ENCODE measurements at regions of chr6 and their contacts with region 1.

Region 1: GRCh38 chr6:157954150-157955117 is 27.2 kb upstream of the SYNJ2 start:
- DNase-seq: peak; percentile 92 to 95
- H3K4me3 ChIP-seq: peak overlapping the region; percentile 31
- H3K4me3 Mint-ChIP-seq: peak overlapping the region; percentile 73
- H3K27ac Mint-ChIP-seq: peak overlapping the region; percentile 99
- H3K4me1 ChIP-seq: peaks cover 33% of the 10 kb centered on the region
- H3K4me1 Mint-ChIP-seq: peaks cover 26% of the 10 kb centered on the region
- H3K27me3 ChIP-seq: no peaks in the 10 kb centered on the region
- H3K27me3 Mint-ChIP-seq: no peaks in the 10 kb centered on the region
- CTCF ChIP-seq: peak; percentile 30 to 48

Region 2: GRCh38 chr6:157323255-157323965 is 631.0 kb before region 1 on chr6 and contains the start of gene TMEM242:
- CTCF ChIA-PET with region 1: no interaction called
- POLR2A ChIA-PET with region 1: no interaction called
- intact Hi-C with region 1: loop called (anchors 10 kb)
- DNase-seq: peak; percentile 92 to 94
- H3K4me3 ChIP-seq: peak within 1 kb of the TSS; percentile 72
- H3K4me3 Mint-ChIP-seq: peak within 1 kb of the TSS; percentile 87
- H3K27ac Mint-ChIP-seq: peak within 1 kb of the TSS; percentile 93
- H3K4me1 ChIP-seq: peaks cover 14% of the 10 kb centered on the region; the same call in 1 of the 2 replicates
- H3K4me1 Mint-ChIP-seq: peaks cover 9% of the 10 kb centered on the region
- H3K27me3 ChIP-seq: no peaks in the 10 kb centered on the region
- H3K27me3 Mint-ChIP-seq: no peaks in the 10 kb centered on the region
- CTCF ChIP-seq: peak; percentile 13 to 43
- total RNA-seq, gene TMEM242: 12.1 and 12.6 TPM in 2 replicates

Region 3: GRCh38 chr6:157514659-157515496 is 439.6 kb before region 1 on chr6:
- CTCF ChIA-PET with region 1: no interaction called
- POLR2A ChIA-PET with region 1: no interaction called
- intact Hi-C with region 1: no loop called
- DNase-seq: no peak
- H3K4me3 ChIP-seq: no peak overlapping the region
- H3K4me3 Mint-ChIP-seq: no peak overlapping the region
- H3K27ac Mint-ChIP-seq: no peak overlapping the region
- H3K4me1 ChIP-seq: peaks cover 29% of the 10 kb centered on the region
- H3K4me1 Mint-ChIP-seq: peaks cover 26% of the 10 kb centered on the region
- H3K27me3 ChIP-seq: no peaks in the 10 kb centered on the region
- H3K27me3 Mint-ChIP-seq: no peaks in the 10 kb centered on the region
- CTCF ChIP-seq: no peak

Region 4: DNA sequence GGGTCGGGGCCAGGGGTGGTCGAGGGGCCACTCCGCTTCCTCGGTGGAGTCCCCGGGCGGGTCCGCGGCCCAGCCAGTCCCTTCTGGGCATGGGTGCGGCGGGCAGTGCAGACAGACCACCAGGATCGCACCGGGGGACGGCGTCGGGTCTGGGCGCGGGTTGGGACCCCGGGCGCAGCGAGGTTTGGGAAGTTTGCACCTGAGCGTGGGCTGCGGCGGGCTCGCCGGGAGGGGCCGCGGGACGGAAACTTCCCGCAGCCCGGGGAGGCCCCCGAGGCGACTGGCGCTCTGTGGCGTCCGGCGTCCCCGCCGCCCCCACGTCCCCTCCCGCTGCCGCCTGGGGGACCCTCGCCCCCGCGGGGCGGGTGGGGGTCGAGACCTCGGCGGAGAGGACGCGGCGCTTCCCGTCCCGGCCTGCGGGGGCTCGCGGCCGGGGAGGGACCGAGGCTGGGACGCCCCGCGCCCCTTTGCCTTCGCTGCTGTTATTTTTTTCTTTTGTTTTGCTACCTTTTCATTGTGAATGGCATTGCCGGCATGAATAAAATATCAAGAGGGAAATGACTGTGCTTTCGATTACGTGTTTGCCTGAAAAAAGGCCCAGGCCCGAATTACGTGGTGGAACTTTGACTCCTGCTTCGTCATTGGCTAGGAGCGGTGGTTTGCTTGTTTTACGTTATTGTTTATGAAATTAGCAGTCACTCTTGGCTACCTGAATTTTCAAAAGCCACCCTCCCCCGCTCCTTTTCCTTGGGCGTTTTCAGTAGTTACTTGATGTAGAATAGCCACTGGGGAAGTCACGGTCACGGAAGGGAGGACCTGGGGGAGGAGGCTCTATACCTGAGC is 130.7 kb before region 1 on chr6:
- CTCF ChIA-PET with region 1: no interaction called
- POLR2A ChIA-PET with region 1: no interaction called
- intact Hi-C with region 1: loop called (anchors 2 kb)
- DNase-seq: peak; percentile 33 to 49
- H3K4me3 ChIP-seq: peak overlapping the region; percentile 92
- H3K4me3 Mint-ChIP-seq: peak overlapping the region; percentile 93
- H3K27ac Mint-ChIP-seq: peak overlapping the region; percentile 93
- H3K4me1 ChIP-seq: peaks cover 22% of the 10 kb centered on the region
- H3K4me1 Mint-ChIP-seq: peaks cover 9% of the 10 kb centered on the region
- H3K27me3 ChIP-seq: no peaks in the 10 kb centered on the region
- H3K27me3 Mint-ChIP-seq: no peaks in the 10 kb centered on the region
- CTCF ChIP-seq: peak in 1 of 2 experiments; percentile 19

Region 5: GRCh38 chr6:157928428-157928827 is 26.0 kb before region 1 on chr6:
- CTCF ChIA-PET with region 1: no interaction called
- POLR2A ChIA-PET with region 1: no interaction called
- intact Hi-C with region 1: no loop called
- DNase-seq: no peak
- H3K4me3 ChIP-seq: no peak overlapping the region
- H3K4me3 Mint-ChIP-seq: no peak overlapping the region
- H3K27ac Mint-ChIP-seq: no peak overlapping the region
- H3K4me1 ChIP-seq: no peaks in the 10 kb centered on the region
- H3K4me1 Mint-ChIP-seq: no peaks in the 10 kb centered on the region
- H3K27me3 ChIP-seq: no peaks in the 10 kb centered on the region
- H3K27me3 Mint-ChIP-seq: no peaks in the 10 kb centered on the region
- CTCF ChIP-seq: no peak

Region 6: GRCh38 chr6:157994126-157994795 is 39.8 kb after region 1 on chr6:
- CTCF ChIA-PET with region 1: interaction called, 13 read pairs
- POLR2A ChIA-PET with region 1: interaction called, 4 read pairs
- intact Hi-C with region 1: no loop called
- DNase-seq: peak; percentile 50 to 66
- H3K4me3 ChIP-seq: no peak overlapping the region
- H3K4me3 Mint-ChIP-seq: no peak overlapping the region
- H3K27ac Mint-ChIP-seq: peak overlapping the region; percentile 74
- H3K4me1 ChIP-seq: peaks cover 21% of the 10 kb centered on the region
- H3K4me1 Mint-ChIP-seq: peaks cover 55% of the 10 kb centered on the region
- H3K27me3 ChIP-seq: no peaks in the 10 kb centered on the region
- H3K27me3 Mint-ChIP-seq: no peaks in the 10 kb centered on the region
- CTCF ChIP-seq: no peak

Region 7: GRCh38 chr6:158040051-158040803 is 85.8 kb after region 1 on chr6:
- CTCF ChIA-PET with region 1: interaction called, 3 read pairs
- POLR2A ChIA-PET with region 1: interaction called, 3 read pairs
- intact Hi-C with region 1: loop called (anchors 1 kb)
- DNase-seq: peak; percentile 82 to 86
- H3K4me3 ChIP-seq: no peak overlapping the region; the same call in 1 of the 2 replicates
- H3K4me3 Mint-ChIP-seq: peak overlapping the region; percentile 67
- H3K27ac Mint-ChIP-seq: peak overlapping the region; percentile 92
- H3K4me1 ChIP-seq: peaks cover 65% of the 10 kb centered on the region
- H3K4me1 Mint-ChIP-seq: peaks cover 54% of the 10 kb centered on the region
- H3K27me3 ChIP-seq: no peaks in the 10 kb centered on the region
- H3K27me3 Mint-ChIP-seq: no peaks in the 10 kb centered on the region
- CTCF ChIP-seq: no peak

Region 8: GRCh38 chr6:158050955-158051354 is 96.5 kb after region 1 on chr6:
- CTCF ChIA-PET with region 1: no interaction called
- POLR2A ChIA-PET with region 1: no interaction called
- intact Hi-C with region 1: no loop called
- DNase-seq: no peak
- H3K4me3 ChIP-seq: no peak overlapping the region
- H3K4me3 Mint-ChIP-seq: no peak overlapping the region
- H3K27ac Mint-ChIP-seq: no peak overlapping the region
- H3K4me1 ChIP-seq: peaks cover 16% of the 10 kb centered on the region
- H3K4me1 Mint-ChIP-seq: peaks cover 4% of the 10 kb centered on the region
- H3K27me3 ChIP-seq: no peaks in the 10 kb centered on the region
- H3K27me3 Mint-ChIP-seq: no peaks in the 10 kb centered on the region
- CTCF ChIP-seq: no peak

Region 9: GRCh38 chr6:158143700-158144099 is 189.3 kb after region 1 on chr6:
- CTCF ChIA-PET with region 1: no interaction called
- POLR2A ChIA-PET with region 1: no interaction called
- intact Hi-C with region 1: no loop called
- DNase-seq: peak in 1 of 2 experiments; percentile 44
- H3K4me3 ChIP-seq: no peak overlapping the region
- H3K4me3 Mint-ChIP-seq: no peak overlapping the region
- H3K27ac Mint-ChIP-seq: no peak overlapping the region
- H3K4me1 ChIP-seq: 0 out of 2 replicates have a peak, but pooled peaks cover 3% of the 10 kb centered on the region
- H3K4me1 Mint-ChIP-seq: no peaks in the 10 kb centered on the region
- H3K27me3 ChIP-seq: no peaks in the 10 kb centered on the region
- H3K27me3 Mint-ChIP-seq: no peaks in the 10 kb centered on the region
- CTCF ChIP-seq: peak; percentile 19 to 51